ENCODE measurements at regions of chr7 and their contacts with region 1.

Region 1: GRCh38 chr7:32479574-32480200 is 10.5 kb downstream of the LSM5 start:
- DNase-seq: peak in 3 of 4 donors; percentile 26 to 44 (median 33)
- ATAC-seq: no peak
- H3K4me3 ChIP-seq: no peak overlapping the region
- H3K27ac ChIP-seq: no peak overlapping the region
- H3K4me1 ChIP-seq: peaks cover 16% of the 10 kb centered on the region
- H3K27me3 ChIP-seq: no peaks in the 10 kb centered on the region
- CTCF ChIP-seq: peak; percentile 60 to 83 (median 72)
- POLR2A ChIP-seq: no peak

Region 2: DNA sequence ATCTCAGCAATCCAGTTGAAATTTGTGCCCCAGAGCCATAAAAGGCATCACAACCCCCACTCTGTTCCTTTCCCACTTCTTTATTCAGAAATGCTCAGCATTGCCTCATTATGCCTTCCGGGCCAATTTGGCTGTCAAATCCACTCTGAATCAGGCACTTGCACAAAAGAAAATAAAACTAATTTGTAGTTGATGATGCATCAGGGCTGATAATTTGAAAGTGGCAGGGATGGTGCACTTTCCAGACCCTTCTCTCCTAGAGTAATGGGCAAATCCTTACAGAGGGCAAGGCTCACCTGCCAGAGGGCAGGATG is 261.6 kb before region 1 on chr7:
- intact Hi-C with region 1: loop called (anchors 10 kb)
- DNase-seq: no peak
- ATAC-seq: no peak
- H3K4me3 ChIP-seq: no peak overlapping the region
- H3K27ac ChIP-seq: no peak overlapping the region
- H3K4me1 ChIP-seq: no peaks in the 10 kb centered on the region
- H3K27me3 ChIP-seq: no peaks in the 10 kb centered on the region
- CTCF ChIP-seq: no peak
- POLR2A ChIP-seq: no peak

Measured in body of pancreas (tissue), 4 donors.